ENCODE measurements at regions of chrX and their contacts with region 1.

Region 1: GRCh38 chrX:153554519-153555167 is 37.2 kb downstream of the ATP2B3 start:
- DNase-seq: peak; percentile 31 to 55
- H3K4me3 ChIP-seq: no peak overlapping the region
- H3K27ac ChIP-seq: no peak overlapping the region
- H3K4me1 ChIP-seq: no peaks in the 10 kb centered on the region
- H3K27me3 ChIP-seq: no peaks in the 10 kb centered on the region
- CTCF ChIP-seq: peak; percentile 39 to 58 (median 53)
- POLR2A ChIP-seq: no peak

Region 2: GRCh38 chrX:153667956-153668396 is 113.3 kb after region 1 on chrX:
- intact Hi-C with region 1: loop called (anchors 10 kb)
- DNase-seq: peak; percentile 70 to 77
- H3K4me3 ChIP-seq: no peak overlapping the region
- H3K27ac ChIP-seq: no peak overlapping the region
- H3K4me1 ChIP-seq: no peaks in the 10 kb centered on the region
- H3K27me3 ChIP-seq: peaks cover 0 to 12% of the 10 kb centered on the region in 2 donors
- CTCF ChIP-seq: peak; percentile 36 to 64 (median 58)
- POLR2A ChIP-seq: no peak

Region 3: GRCh38 chrX:153687121-153688039 is 132.7 kb after region 1 on chrX and contains the start of gene SLC6A8:
- intact Hi-C with region 1: no loop called
- DNase-seq: peak; percentile 69 to 78
- H3K4me3 ChIP-seq: peak within 1 kb of the TSS; percentile 22 to 46
- H3K27ac ChIP-seq: peak within 1 kb of the TSS; percentile 64 to 79
- H3K4me1 ChIP-seq: no peaks in the 10 kb centered on the region
- H3K27me3 ChIP-seq: no peaks in the 10 kb centered on the region
- CTCF ChIP-seq: peak in 3 of 4 experiments; percentile 10 to 17 (median 13)
- POLR2A ChIP-seq: peak; percentile 57 to 58
- total RNA-seq, gene SLC6A8: 4.7 to 40.3 (median 11.2) TPM